Natural killer cell (primary cell): ENCODE measurements at regions of chr16 and their contacts with region 1.

Region 1: GRCh38 chr16:87387942-87388817 is 4.0 kb upstream of the MAP1LC3B start:
- DNase-seq: peak; percentile 79 to 96
- ATAC-seq: peak; percentile 64 to 83 (median 67)
- H3K4me3 ChIP-seq: peak overlapping the region; percentile 9
- H3K4me3 Mint-ChIP-seq: peak overlapping the region; percentile 61
- H3K27ac ChIP-seq: peak overlapping the region; percentile 80
- H3K27ac Mint-ChIP-seq: peak overlapping the region; percentile 95 to 97
- H3K4me1 ChIP-seq: peaks cover 33% of the 10 kb centered on the region
- H3K4me1 Mint-ChIP-seq: peaks cover 39 to 48% of the 10 kb centered on the region in 2 donors
- H3K27me3 ChIP-seq: no peaks in the 10 kb centered on the region
- H3K27me3 Mint-ChIP-seq: no peaks in the 10 kb centered on the region
- CTCF ChIP-seq: no peak

Region 2: DNA sequence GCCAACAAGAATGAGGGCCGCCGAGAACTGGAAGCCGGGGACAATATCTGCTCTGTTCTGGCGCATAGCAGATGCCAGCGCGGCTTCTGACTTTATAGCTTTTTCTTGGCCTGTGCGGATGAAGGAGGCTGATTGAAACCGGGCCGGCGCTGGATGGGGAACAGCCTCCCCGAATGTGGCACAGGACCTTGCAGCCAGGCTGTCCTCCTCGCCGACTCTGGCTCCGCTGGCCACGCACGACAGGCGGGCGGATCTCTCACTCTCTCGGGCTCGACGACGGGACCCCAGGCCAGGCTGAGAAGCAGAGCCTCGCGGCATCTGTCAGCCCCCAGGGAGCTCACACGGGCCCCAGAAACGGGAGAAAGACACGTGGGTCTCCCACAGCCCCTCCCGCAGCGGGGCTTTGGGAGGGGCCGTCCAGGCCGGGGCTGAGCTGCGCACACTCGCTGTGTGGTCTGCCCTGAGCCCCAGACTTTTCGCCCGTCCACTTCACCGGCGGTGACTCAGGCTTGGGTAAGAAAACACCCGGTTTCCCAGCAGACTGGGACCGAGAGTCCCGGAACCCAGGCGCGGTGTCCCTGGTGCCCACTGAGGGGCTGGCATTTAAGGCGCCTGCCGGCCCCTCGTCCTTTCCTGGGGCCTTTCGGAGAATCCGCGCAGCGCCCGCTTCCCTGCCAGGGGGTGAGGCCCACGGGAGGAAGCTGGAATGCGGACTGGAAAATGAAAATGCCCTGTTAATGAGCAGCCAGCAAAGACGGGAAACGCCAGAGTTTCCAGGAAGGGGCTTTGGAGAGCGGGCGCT is 171.5 kb before region 1 on chr16:
- intact Hi-C with region 1: no loop called
- DNase-seq: no peak
- ATAC-seq: no peak
- H3K4me3 ChIP-seq: no peak overlapping the region
- H3K4me3 Mint-ChIP-seq: no peak overlapping the region
- H3K27ac ChIP-seq: no peak overlapping the region
- H3K27ac Mint-ChIP-seq: no peak overlapping the region
- H3K4me1 ChIP-seq: no peaks in the 10 kb centered on the region
- H3K4me1 Mint-ChIP-seq: no peaks in the 10 kb centered on the region
- H3K27me3 ChIP-seq: no peaks in the 10 kb centered on the region
- H3K27me3 Mint-ChIP-seq: no peaks in the 10 kb centered on the region
- CTCF ChIP-seq: no peak

Region 3: GRCh38 chr16:87316923-87317749 is 71.0 kb before region 1 on chr16 and contains the start of gene C16orf95:
- intact Hi-C with region 1: loop called (anchors 2 kb)
- DNase-seq: peak; percentile 97
- ATAC-seq: peak; percentile 89 to 94 (median 92)
- H3K4me3 ChIP-seq: peak within 1 kb of the TSS; percentile 95
- H3K4me3 Mint-ChIP-seq: peak within 1 kb of the TSS; percentile 97
- H3K27ac ChIP-seq: peak within 1 kb of the TSS; percentile 76
- H3K27ac Mint-ChIP-seq: peak within 1 kb of the TSS; percentile 91 to 97
- H3K4me1 ChIP-seq: peaks cover 13% of the 10 kb centered on the region
- H3K4me1 Mint-ChIP-seq: peaks cover 18 to 20% of the 10 kb centered on the region in 2 donors
- H3K27me3 ChIP-seq: no peaks in the 10 kb centered on the region
- H3K27me3 Mint-ChIP-seq: no peaks in the 10 kb centered on the region
- CTCF ChIP-seq: peak; percentile 38
- total RNA-seq, gene C16orf95: 1.6 to 4.1 (median 2.7) TPM

Region 4: DNA sequence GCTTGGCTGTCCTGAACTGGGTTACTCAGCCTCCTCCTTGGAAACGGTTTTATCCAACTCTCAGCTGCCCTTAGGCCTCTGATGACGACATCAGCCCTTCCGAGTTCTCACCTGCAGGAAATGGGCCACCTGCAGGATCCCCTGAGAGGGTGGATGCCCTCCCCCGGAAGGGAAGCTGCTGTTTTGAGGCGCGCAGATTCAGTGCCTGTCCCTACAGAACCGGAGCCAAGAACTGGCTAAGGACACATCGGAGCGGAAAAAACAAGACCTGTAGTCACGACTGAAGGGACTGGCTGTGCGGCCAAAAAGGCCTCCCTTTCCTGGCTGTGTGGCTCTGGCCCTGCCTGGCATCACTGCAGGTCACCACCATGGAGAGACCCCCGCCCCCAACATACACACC is 59.3 kb before region 1 on chr16:
- intact Hi-C with region 1: no loop called
- DNase-seq: no peak
- ATAC-seq: no peak
- H3K4me3 ChIP-seq: no peak overlapping the region
- H3K4me3 Mint-ChIP-seq: no peak overlapping the region
- H3K27ac ChIP-seq: no peak overlapping the region
- H3K27ac Mint-ChIP-seq: no peak overlapping the region
- H3K4me1 ChIP-seq: peaks cover 7% of the 10 kb centered on the region
- H3K4me1 Mint-ChIP-seq: peaks cover 0 to 11% of the 10 kb centered on the region in 2 donors
- H3K27me3 ChIP-seq: no peaks in the 10 kb centered on the region
- H3K27me3 Mint-ChIP-seq: no peaks in the 10 kb centered on the region
- CTCF ChIP-seq: no peak